ENCODE measurements at regions of chr12 and their contacts with region 1.

Region 1: DNA sequence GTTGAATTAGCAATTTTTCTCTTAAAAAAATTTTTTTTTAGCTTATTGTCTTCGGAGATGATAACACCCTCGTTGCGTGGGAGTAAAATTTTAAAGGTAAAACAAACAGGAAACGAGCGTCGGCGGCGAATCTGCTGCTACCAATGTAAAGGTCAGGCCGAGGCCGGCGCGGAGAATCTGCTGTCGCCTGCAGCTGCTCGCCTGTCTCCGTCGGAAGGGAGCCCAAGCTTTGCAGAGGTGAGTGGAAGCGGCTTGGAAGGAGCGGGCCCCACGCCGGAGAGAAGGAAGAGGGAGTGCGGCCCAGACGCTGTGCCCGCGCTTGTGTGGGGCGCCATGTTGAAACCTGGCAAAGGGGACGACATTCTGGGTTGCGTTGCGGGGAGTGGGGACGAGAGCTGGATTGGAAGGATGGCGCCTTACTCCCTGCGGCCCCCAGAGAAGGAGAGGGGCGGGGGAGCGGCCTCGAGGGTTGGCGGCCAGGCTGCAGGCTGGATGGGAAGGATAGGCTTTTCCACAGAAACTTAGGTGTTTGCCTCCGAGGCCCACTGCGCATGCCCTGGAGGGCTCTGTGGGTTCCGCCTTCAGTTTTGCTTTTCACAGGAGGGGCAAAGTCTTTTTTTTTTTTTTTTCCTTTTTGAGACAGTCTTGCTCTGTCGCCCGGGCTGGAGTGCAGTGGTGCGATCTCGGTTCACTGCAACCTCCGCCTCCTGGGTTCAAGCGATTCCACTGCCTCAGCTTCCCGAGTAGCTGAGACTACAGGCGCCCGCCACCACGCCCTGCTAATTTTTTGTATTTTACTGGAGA is at the start of gene SNRNP35:
- DNase-seq: peak; percentile 64 to 92 (median 84)

Region 2: DNA sequence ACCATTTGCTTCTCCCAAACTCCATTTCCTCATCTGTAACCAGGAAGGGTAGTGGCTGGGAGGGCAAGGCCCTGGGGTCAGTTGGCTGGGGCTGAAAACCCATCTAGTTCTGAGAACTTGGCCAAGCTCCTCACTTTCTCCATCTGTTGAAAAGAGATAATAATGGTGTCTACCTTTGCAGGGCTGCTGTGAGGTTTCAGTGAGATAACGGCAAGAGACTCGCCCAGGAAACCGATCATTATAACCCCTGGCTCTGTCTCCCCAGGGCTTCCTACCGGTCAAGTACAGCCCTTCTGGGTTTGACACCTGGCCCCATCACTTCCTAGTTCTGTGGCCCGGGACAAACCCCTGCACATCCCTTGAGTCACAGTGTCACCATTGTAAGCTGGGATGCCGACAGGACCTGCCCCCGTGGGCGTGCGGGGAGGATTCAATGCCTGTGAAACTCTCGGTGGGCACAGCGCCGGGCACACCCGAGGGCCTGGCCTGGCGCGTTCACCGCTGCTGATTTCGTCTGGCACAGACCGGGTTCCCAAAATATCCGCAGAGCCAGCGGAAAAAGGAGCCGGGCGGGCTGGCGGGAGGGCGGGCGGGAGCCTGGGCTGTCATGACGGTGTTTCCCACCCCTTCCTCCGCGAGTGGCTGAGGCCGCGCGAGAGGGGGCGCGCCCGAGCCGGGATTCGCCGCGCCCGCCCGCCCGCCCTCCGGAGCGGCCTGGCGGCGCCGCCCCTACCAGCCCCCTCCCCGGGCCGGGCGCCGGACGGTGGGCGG is 69.8 kb before region 1 on chr12:
- intact Hi-C with region 1: loop called (anchors 10 kb)
- DNase-seq: peak; percentile 50 to 90 (median 82)

Region 3: DNA sequence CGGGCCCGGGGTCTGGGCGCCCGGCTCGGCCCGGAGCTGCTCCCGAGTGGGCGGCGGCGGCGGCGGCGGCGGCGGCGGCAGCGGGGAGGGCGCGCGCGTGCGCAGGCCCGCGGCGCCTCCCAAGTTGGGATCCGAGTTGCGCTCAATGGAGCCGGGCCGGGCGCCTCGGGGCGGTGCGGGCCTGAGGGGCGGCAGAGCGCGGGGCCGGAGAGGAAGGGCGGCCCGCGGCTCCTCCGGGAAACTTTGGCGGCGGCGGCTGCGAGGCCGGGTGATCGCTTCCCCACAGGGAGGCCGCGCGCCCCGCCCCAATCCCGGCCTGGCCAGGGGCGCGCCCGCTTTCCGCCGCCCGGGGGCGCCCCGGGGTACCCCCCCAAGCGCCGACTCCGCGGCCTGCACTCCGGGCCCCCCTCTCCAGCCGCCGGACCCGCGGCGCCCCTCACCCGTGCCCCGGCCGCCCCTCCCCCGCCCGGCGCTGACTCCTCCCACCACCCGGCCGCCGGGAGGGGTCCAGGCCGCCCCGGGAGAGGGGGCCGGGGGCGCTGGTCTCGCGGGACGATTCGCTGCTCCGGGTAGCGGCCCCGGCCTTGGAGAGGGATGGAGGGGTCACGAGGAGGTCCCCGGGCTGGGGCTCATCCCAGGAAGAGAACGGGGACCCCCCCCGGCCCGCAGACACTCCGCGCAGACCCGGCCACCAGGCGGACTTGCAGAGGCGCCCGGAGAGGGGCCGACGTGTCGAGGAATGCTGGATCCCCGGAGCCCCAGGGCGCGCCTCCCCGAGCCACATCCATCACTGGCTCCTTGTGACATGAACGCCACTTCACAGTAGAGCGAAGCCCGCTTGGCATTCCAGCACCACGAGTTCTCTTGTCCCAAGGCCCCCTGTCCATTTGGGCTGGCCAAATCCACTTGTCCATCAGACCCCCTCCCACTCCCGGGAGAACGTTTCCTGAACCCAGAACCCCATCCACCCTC is 75.8 kb after region 1 on chr12 and contains the start of gene RILPL1:
- intact Hi-C with region 1: loop called (anchors 5 kb)
- DNase-seq: peak in 41 of 42 donors; percentile 26 to 85 (median 63)

Measured in head of caudate nucleus (tissue), 42 donors.